Mammary epithelial cell (primary cell): ENCODE measurements at regions of chrX and their contacts with region 1.

Region 1: GRCh38 chrX:25998687-25999086 is 139.5 kb upstream of the MAGEB18 start:
- DNase-seq: no peak
- H3K4me3 ChIP-seq: no peak overlapping the region
- H3K27ac ChIP-seq: no peak overlapping the region
- H3K4me1 ChIP-seq: no peaks in the 10 kb centered on the region
- H3K27me3 ChIP-seq: no peaks in the 10 kb centered on the region
- CTCF ChIP-seq: no peak

Region 2: DNA sequence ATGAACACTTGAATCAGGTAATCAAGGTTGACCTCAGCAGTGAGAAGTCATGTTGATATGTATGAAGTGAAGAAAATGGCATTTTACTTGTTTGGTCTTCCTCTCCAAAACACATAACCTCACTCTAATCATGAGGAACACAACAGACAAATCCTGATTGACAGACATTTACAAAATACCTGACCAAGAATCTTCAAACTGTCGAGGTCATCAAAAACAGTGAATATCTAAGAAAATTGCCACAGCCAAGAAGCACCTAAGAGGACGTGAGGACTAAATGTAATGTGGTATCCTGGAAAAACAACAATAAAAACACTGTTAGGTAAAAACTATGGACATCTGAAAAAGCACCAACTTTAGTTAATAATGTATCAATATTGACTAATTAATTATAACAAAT is 10.0 kb after region 1 on chrX:
- CTCF ChIA-PET with region 1: no interaction called
- dilution Hi-C with region 1: no loop called
- in situ Hi-C with region 1: no loop called
- intact Hi-C with region 1: no loop called
- DNase-seq: no peak
- H3K4me3 ChIP-seq: no peak overlapping the region
- H3K27ac ChIP-seq: no peak overlapping the region
- H3K4me1 ChIP-seq: no peaks in the 10 kb centered on the region
- H3K27me3 ChIP-seq: no peaks in the 10 kb centered on the region
- CTCF ChIP-seq: no peak

Region 3: GRCh38 chrX:26037367-26037766 is 38.7 kb after region 1 on chrX:
- CTCF ChIA-PET with region 1: no interaction called
- dilution Hi-C with region 1: loop called (anchors 5 kb)
- in situ Hi-C with region 1: no loop called
- intact Hi-C with region 1: no loop called
- DNase-seq: no peak
- H3K4me3 ChIP-seq: no peak overlapping the region
- H3K27ac ChIP-seq: no peak overlapping the region
- H3K4me1 ChIP-seq: no peaks in the 10 kb centered on the region
- H3K27me3 ChIP-seq: no peaks in the 10 kb centered on the region
- CTCF ChIP-seq: no peak